AG04449 (cell line): ENCODE measurements at regions of chr19 and their contacts with region 1.

Region 1: DNA sequence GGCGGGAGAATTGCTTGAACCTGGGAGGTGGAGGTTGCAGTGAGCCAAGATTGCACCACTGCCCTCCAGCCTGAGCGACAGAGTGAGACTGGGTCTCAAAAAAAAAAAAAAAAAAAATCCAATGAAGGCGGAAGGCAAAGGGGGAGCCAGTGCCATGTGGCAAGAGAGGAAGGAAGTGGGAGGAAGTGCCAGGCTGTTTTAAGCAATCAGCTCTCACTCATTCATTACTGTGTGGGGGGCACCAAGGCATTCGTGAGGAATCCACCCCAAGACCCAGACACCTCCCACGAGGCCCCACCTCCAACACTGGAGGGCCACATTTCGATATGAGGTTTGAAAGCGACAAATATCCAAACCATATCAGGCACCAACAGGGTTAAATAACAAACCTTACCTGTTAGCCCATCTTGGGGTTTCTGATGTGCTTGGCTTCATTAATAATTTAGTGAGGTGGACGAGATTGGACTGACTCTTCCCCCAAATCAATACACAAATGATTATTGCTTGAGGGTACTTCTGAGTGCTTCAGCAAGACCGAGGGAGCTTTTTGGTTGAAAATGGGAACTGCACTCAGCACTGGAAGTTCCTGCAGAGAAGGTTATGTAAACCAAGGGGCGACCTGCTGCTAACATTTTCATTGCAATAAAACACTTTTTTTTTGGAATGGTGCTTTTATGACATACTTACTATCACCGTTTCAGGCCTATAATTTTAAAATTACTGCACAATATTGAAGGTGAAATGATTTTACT is 7.5 kb upstream of the LRP3 start:
- DNase-seq: no peak
- H3K4me3 ChIP-seq: no peak overlapping the region
- CTCF ChIP-seq: no peak

Region 2: DNA sequence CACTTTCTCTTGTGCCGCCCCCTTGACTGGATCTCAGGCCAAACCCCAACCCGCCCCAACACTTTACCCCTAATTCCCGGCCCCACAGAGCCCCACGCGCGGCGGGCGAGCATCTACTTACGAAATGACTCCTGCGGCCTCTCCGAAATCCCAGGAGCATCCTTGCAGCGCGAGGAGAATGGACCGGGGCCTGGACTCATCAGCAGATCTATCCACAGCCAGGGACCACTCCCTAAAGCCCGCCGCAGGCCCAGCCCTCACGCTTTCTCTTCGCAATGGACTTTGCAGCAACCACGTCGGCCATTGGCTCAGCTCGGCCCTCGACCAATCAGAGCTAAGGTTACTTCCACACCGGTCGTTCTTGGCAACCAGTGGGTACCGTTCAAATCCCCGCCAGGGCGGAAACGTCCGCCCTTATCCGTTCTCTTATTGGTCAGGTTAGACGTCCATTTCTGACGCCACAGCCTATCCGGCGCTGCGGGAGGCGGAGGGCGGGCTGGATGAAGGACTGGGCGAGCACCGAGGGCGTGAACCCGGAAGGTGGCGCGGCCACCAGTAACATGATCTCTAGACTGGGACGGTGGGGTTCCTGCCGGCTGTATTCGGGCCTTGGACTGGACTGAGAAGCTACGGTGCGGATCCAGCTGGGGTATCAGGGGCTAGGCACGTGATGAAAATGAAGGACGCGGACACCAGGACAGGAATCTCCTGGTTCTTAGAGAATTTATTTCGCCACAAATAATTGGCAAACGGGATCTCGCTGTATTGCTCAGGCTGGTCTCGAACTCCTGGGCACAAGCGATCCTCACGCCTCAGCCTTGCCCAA is 214.7 kb before region 1 on chr19 and contains the starts of genes CEP89 and FAAP24:
- CTCF ChIA-PET with region 1: interaction called, 11 read pairs
- POLR2A ChIA-PET with region 1: no interaction called
- DNase-seq: peak; percentile 95
- H3K4me3 ChIP-seq: peak within 1 kb of the TSS; percentile 84
- CTCF ChIP-seq: no peak

Region 3: GRCh38 chr19:33125929-33126388 is 60.6 kb before region 1 on chr19:
- CTCF ChIA-PET with region 1: interaction called, 99 read pairs
- POLR2A ChIA-PET with region 1: no interaction called
- DNase-seq: no peak
- H3K4me3 ChIP-seq: no peak overlapping the region
- CTCF ChIP-seq: peak; percentile 82

Region 4: GRCh38 chr19:33143897-33144405 is 42.7 kb before region 1 on chr19:
- CTCF ChIA-PET with region 1: interaction called, 72 read pairs
- POLR2A ChIA-PET with region 1: no interaction called
- DNase-seq: no peak
- H3K4me3 ChIP-seq: no peak overlapping the region
- CTCF ChIP-seq: peak; percentile 97

Region 5: GRCh38 chr19:33208904-33209849 is 22.6 kb after region 1 on chr19:
- CTCF ChIA-PET with region 1: interaction called, 12 read pairs
- POLR2A ChIA-PET with region 1: no interaction called
- DNase-seq: no peak
- H3K4me3 ChIP-seq: no peak overlapping the region
- CTCF ChIP-seq: no peak